Posterior vena cava (tissue), 2 donors: ENCODE measurements at regions of chr3 and their contacts with region 1.

Region 1: GRCh38 chr3:126982471-126983175 is at the start of gene PLXNA1:
- DNase-seq: peak; percentile 95
- total RNA-seq, gene PLXNA1: 31.7 to 38.5 TPM

Region 2: GRCh38 chr3:126679318-126679751 is 303.3 kb before region 1 on chr3:
- intact Hi-C with region 1: loop called in 1 of 2 experiments (anchors 10 kb)
- DNase-seq: peak; percentile 94

Region 3: GRCh38 chr3:126752303-126752842 is 230.2 kb before region 1 on chr3:
- intact Hi-C with region 1: loop called (anchors 5 kb)
- DNase-seq: peak; percentile 93